H1 (cell line): ENCODE measurements at regions of chr7 and their contacts with region 1.

Region 1: GRCh38 chr7:1144269-1144771 is 15.7 kb downstream of the ZFAND2A start:
- DNase-seq: no peak
- H3K4me3 ChIP-seq: no peak overlapping the region
- H3K27ac ChIP-seq: no peak overlapping the region
- H3K4me1 ChIP-seq: no peaks in the 10 kb centered on the region
- H3K27me3 ChIP-seq: no peaks in the 10 kb centered on the region
- CTCF ChIP-seq: peak in 1 of 3 experiments; percentile 18; a peak in 1 of 4 replicates
- EP300 ChIP-seq: no peak
- POLR2A ChIP-seq: no peak
- RAD21 ChIP-seq: peak; percentile 19 to 49; a peak in 3 of 4 replicates

Region 2: DNA sequence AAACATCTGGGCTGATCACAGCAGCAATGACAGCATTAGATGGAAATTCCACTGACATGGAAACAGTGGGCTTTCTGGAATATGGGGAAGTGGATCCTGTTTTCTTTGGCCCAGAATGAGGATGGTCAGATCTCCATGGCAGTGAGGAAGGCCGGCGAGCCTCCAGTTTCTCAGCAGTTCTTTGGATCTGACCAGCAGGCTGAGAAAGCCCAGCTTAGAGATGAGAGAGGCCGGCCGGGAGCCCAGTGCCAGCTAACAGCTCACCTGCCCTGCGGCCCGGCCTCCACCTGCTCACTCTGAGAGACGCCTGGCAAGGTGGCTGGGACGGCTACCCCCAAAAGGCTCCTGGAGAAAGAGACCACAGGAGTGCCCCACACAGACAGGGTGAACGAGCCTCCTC is 32.2 kb before region 1 on chr7:
- CTCF ChIA-PET with region 1: no interaction called
- POLR2A ChIA-PET with region 1: no interaction called
- DNase-seq: no peak
- H3K4me3 ChIP-seq: no peak overlapping the region
- H3K27ac ChIP-seq: no peak overlapping the region
- H3K4me1 ChIP-seq: no peaks in the 10 kb centered on the region
- H3K27me3 ChIP-seq: no peaks in the 10 kb centered on the region
- CTCF ChIP-seq: no peak
- EP300 ChIP-seq: no peak
- POLR2A ChIP-seq: no peak
- RAD21 ChIP-seq: no peak

Region 3: DNA sequence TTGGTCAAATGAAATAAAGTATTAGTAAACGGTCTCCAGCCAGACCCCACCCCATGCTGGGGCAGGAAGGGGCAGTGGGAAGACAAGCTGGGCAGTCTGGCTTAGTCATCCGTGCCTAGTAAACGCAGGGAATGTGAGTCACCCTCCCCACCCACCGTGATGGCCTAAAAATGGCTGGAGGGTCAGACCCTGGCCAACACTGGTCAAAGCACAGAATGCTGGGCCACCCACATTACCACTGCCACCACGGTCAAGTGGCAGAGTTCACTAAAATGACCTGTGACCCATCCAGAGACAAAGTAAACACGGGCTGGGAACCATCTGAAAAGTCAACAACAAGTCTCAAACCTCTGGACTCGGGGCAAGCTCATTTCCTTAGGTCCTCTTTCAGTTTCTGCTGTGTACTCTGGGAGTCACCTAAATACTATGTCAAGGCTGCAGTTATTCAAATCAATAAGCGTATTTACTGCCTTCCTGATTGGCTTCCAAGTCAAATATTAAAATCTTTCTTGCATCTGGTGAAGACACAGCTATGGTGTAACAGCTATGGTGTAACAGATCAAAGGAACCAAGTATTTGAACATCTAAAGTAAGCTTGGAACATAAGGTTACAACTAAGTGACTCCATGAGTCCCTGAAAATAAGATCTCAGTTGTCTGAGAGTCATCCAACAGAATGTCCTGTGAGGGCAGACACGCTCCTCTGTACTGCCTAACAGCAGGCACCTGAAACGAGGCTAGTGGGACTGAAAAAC is 12.6 kb after region 1 on chr7:
- CTCF ChIA-PET with region 1: interaction called, 11 read pairs
- POLR2A ChIA-PET with region 1: interaction called, 4 read pairs
- DNase-seq: no peak
- H3K4me3 ChIP-seq: no peak overlapping the region
- H3K27ac ChIP-seq: no peak overlapping the region
- H3K4me1 ChIP-seq: peaks cover 0 to 2% (median 0%) of the 10 kb centered on the region in 4 experiments; a peak in 3 of 7 replicates
- H3K27me3 ChIP-seq: no peaks in the 10 kb centered on the region
- CTCF ChIP-seq: no peak
- EP300 ChIP-seq: no peak
- POLR2A ChIP-seq: no peak
- RAD21 ChIP-seq: no peak

Region 4: DNA sequence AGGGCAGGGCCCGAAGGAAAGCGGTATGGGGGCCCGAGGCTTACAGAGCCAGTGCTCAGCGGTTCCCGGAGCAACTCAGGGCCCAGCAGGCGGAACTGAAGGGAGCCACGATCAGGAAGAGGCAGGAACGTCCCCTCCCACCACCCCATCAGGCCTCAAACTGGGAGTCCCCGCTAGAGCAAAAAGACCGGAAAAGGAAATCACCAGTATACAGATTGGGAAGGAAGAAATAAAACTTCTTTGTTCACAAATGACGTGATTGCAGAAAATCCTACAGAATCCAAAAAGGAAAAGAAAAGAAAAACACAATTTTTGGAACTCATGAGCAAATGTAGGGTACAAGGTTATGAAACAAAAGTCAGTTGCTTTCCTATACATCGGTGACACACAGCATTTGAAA is 37.3 kb after region 1 on chr7:
- CTCF ChIA-PET with region 1: interaction called, 17 read pairs
- POLR2A ChIA-PET with region 1: no interaction called
- DNase-seq: no peak
- H3K4me3 ChIP-seq: no peak overlapping the region
- H3K27ac ChIP-seq: no peak overlapping the region
- H3K4me1 ChIP-seq: no peaks in the 10 kb centered on the region
- H3K27me3 ChIP-seq: no peaks in the 10 kb centered on the region; a peak in 1 of 7 replicates
- CTCF ChIP-seq: no peak
- EP300 ChIP-seq: no peak
- POLR2A ChIP-seq: no peak
- RAD21 ChIP-seq: no peak

Region 5: DNA sequence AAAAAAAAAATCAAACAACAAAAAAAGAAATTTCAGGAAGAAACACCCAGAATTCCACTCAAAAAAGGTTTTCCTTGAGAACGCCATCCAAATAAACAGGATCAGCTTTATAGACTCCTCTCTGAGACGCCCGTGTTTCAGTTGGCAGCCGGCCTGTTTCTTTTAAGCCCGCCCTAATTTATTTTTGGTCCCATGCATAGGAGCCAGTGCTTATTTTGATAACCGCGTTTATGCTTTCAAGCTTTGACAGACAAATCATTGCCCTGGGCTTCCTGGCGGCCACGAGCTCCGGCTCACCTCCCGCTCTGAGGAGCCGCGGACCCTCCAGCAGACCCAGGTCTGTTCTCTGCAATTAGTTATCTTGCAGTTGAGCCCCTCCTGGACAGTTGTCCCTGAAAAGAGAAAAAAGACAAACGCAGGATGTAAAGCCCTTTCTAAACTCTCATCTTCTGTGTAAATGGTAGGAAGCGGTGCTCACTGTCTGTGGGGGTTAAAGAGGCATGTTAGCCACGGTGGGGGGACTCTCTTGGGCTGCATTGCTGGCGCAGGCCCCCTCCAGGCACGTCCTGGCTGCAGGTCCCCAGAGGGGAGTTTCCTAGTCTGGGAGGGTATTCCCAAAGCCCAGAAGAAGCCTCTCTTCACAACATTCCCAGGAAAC is 66.1 kb after region 1 on chr7:
- CTCF ChIA-PET with region 1: no interaction called
- POLR2A ChIA-PET with region 1: no interaction called
- DNase-seq: no peak
- H3K4me3 ChIP-seq: no peak overlapping the region
- H3K27ac ChIP-seq: no peak overlapping the region
- H3K4me1 ChIP-seq: no peaks in the 10 kb centered on the region
- H3K27me3 ChIP-seq: no peaks in the 10 kb centered on the region
- CTCF ChIP-seq: no peak
- EP300 ChIP-seq: no peak
- POLR2A ChIP-seq: no peak
- RAD21 ChIP-seq: no peak